Sciatic nerve (tissue), 2 donors: ENCODE measurements at regions of chr3 and their contacts with region 1.

Region 1: DNA sequence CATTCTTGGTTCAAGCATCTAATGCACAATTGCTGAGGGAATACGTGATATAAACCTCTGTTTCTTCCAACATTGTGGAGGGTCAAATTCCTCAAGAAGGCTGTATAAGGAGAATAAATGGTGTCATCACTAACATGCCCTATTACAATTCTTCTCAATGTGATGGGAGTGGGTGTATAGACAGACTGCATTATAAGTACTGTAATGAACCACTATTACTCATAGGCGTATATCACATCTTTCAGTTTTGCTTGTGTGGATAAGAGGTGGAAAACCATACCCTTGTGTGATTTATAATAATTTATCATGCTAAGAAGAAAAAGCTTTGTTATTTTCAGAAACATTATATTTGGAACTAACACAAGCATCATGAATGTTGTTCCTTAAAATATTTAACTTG is 35.3 kb upstream of the BBX start:
- DNase-seq: no peak
- ATAC-seq: no peak

Region 2: DNA sequence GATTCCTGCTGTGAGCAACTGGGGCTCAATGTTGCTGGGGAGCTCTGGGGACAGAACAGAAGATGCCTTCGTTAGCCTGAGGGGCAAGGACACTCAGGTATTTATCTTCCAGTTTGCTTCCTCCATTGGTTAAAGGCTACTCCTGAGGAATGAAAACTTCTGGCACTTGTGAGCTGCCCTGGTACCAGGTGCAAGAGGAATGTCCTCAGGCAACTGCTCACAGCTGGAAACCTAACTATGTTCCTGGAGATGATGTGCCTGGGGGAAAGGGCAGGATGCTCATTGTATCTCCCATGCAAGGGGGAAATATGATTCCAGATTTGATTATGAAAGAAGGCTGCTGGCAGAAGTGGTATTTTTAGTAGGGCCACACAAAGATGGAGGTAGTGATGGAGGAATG is 18.7 kb before region 1 on chr3:
- intact Hi-C with region 1: no loop called
- DNase-seq: no peak
- ATAC-seq: no peak

Region 3: DNA sequence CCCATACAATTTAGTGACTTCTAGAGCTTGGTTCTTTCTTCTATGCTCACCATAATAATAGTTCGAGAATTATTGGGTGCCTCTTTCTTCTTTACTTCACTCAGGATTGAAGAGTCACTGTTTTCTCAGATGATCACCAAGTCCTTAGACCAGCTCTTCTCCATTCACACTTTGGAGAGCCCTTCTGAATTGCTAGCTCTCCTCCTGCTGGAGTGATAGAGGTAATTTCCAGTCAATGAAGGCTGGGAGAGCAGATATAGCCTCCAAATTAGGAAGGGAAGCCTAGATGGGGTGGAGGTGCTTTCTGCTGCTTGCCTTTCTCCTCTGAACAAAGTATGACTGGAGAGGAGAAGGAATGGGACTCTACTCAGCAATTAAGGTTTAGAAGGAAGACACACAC is 24.6 kb after region 1 on chr3:
- intact Hi-C with region 1: loop called (anchors 1 kb)
- DNase-seq: no peak
- ATAC-seq: no peak

Region 4: DNA sequence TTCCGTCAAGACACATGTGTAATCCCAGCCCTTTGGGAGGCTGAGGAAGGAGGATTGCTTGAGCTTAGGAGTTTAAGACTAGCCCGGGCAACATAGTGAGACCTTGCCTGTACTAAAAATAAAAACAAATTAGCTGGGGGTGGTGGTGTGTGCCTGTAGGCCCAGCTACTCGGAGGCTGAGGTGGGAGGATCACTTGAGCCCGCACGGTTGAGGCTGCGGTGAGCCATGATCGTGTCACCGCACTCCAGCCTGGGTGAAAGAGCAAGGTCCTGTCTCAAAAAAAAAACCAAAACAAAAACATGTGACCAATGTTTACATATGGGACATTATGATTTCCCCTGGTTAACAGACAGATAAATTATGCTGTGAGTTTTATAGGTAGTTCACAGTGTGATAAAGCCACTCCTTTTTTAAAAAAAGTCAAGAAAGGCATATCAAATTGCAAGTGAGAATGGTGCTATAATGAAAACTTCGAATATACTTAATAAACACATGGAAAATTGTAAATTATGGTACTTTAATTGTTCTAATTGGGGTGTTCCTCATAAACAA is 44.5 kb after region 1 on chr3:
- intact Hi-C with region 1: no loop called
- DNase-seq: no peak
- ATAC-seq: no peak